Gastrocnemius medialis (tissue), 4 donors: ENCODE measurements at regions of chr10 and their contacts with region 1.

Region 1: GRCh38 chr10:44334621-44335184 is 50.2 kb downstream of the CXCL12 start:
- DNase-seq: peak; percentile 58 to 74
- ATAC-seq: peak; percentile 90 to 91
- H3K4me3 ChIP-seq: peak overlapping the region in 1 of 4 donors; percentile 19
- H3K27ac ChIP-seq: peak overlapping the region; percentile 89 to 96 (median 92)
- H3K4me1 ChIP-seq: peaks cover 49% of the 10 kb centered on the region in 2 donors
- H3K27me3 ChIP-seq: no peaks in the 10 kb centered on the region
- CTCF ChIP-seq: no peak
- POLR2A ChIP-seq: peak; percentile 12 to 57

Region 2: DNA sequence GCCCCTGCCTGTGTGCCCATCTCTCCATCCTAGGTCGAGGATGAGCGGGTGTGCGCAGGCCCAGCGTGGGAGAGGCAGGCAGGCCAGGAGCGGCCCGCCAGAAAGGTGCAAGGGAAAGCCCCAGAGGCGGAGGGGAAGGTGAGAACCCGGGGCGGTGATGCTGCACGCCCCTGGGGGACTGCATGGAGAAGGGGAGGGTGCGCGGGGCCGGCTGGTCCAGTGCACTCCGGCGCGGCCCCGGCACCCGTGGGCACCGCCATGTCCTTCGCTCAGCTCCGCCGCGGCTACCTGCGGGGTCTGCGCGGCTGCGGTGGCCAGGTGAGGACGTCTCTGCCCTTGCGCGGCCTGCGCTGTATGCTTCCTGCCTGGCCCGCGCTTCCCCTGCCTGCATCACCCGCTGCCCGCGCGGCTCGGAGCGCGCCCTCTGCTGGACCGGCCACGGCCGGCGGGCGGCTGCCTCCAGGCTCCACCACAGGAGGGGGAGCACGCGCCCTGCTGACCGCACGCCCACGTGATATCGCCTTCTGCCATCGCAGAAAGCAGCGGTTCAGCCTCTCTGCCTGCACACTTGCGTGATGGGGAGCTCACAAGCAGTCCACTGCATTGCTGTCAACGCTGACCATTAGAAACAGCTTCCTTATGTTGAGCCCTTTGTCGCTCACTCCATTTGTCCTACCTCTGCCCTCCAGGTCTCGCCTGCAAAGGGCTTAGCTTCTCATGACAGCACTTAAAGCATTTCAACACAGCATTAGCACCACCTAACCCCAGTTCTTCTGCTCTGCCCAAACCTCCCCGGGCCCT is 23.7 kb before region 1 on chr10:
- in situ Hi-C with region 1: no loop called
- intact Hi-C with region 1: loop called (anchors 1 kb)
- DNase-seq: peak; percentile 80 to 88
- ATAC-seq: peak; percentile 73 to 83
- H3K4me3 ChIP-seq: peak overlapping the region; percentile 27 to 62 (median 36)
- H3K27ac ChIP-seq: peak overlapping the region in 3 of 4 donors; percentile 21 to 39 (median 35)
- H3K4me1 ChIP-seq: peaks cover 0 to 8% of the 10 kb centered on the region in 2 donors
- H3K27me3 ChIP-seq: no peaks in the 10 kb centered on the region
- CTCF ChIP-seq: peak; percentile 85 to 97 (median 93)
- POLR2A ChIP-seq: no peak

Region 3: DNA sequence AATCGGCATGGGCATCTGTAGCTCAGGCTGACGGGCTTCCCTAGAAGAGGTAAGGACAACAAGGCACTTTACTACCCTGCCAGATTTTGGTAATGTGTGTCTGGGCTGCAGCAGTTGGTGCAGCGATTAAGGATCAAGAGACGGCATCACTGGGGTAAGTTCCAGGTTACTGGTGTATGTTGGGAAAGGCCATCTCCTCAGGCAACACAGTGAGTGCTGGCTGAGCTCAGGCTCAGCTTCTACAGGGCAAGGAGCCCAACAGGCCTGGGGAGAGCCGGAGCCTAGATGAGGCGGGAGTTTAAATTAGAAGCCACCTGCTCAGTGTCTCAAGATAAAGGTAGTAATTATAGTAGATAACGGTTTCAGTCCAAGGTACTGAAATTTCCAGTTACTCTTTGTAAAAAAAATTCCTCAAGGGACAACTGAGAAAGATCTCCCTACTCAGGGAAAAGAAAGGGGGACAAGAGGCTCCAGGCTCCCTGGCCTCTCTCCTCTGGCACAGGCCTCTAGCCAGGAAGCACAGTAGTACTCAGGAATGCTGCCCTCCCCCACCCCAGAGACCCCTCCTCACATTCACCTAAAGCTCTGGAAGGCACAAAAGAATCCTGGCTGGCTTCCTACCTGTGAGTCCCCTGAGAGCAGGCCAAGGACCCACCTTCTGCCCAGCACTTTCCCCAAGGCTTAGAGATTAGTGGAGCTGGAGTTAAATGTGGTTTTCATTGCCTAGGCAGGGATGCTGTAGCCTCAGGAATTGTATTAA is 46.3 kb after region 1 on chr10:
- in situ Hi-C with region 1: no loop called
- intact Hi-C with region 1: loop called (anchors 1 kb)
- DNase-seq: peak; percentile 39 to 56
- ATAC-seq: peak; percentile 49 to 56
- H3K4me3 ChIP-seq: no peak overlapping the region
- H3K27ac ChIP-seq: peak overlapping the region; percentile 53 to 87 (median 70)
- H3K4me1 ChIP-seq: peaks cover 58 to 76% of the 10 kb centered on the region in 2 donors
- H3K27me3 ChIP-seq: no peaks in the 10 kb centered on the region
- CTCF ChIP-seq: no peak
- POLR2A ChIP-seq: no peak

Region 4: DNA sequence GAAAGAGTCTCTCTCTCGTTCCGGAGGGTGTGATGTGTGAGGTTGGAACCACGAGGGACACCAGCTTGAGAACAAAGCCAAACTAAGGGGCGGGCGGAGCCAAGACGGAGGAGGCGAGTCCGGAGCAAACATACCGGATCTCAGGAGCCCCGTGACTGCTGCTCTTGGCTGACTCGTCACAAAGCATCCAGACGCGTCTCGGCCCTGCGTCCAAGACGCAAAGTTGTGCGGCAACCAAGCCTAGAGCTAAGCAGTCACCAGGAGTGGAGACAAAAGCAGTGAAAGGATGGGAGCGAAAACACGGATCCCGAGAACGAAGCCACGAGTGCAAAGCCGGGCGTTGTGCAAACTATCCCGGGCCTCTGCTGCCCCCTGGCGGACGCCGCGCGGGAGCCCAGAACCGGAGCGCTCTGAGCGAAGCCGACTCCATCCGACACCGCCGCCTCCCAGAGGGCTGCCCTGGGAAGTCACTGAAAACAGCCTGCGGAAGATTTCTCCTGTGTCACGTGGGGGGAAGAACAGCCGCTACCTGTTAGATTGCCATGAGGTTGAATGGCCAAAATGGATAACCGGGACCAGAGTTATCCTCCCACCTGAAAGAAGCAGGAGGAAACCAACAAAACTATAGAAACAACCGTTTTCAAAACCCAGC is 530.1 kb after region 1 on chr10:
- in situ Hi-C with region 1: loop called in 1 of 4 experiments (anchors 25 kb)
- intact Hi-C with region 1: no loop called
- DNase-seq: peak; percentile 71 to 78
- ATAC-seq: peak; percentile 91 to 94
- H3K4me3 ChIP-seq: peak overlapping the region; percentile 51 to 64 (median 60)
- H3K27ac ChIP-seq: peak overlapping the region; percentile 36 to 65 (median 56)
- H3K4me1 ChIP-seq: peaks cover 0 to 9% of the 10 kb centered on the region in 2 donors
- H3K27me3 ChIP-seq: peaks cover 0 to 6% (median 0%) of the 10 kb centered on the region in 3 donors
- CTCF ChIP-seq: peak; percentile 86 to 98 (median 95)
- POLR2A ChIP-seq: no peak

Region 5: GRCh38 chr10:45008524-45009161 is 673.9 kb after region 1 on chr10:
- in situ Hi-C with region 1: no loop called
- intact Hi-C with region 1: loop called (anchors 10 kb)
- DNase-seq: no peak
- ATAC-seq: peak; percentile 85 to 89
- H3K4me3 ChIP-seq: no peak overlapping the region
- H3K27ac ChIP-seq: no peak overlapping the region
- H3K4me1 ChIP-seq: peaks cover 0 to 5% of the 10 kb centered on the region in 2 donors
- H3K27me3 ChIP-seq: no peaks in the 10 kb centered on the region
- CTCF ChIP-seq: peak; percentile 55 to 80 (median 73)
- POLR2A ChIP-seq: no peak